Breast epithelium (tissue), 4 donors: ENCODE measurements at regions of chr5 and their contacts with region 1.

Region 1: GRCh38 chr5:123344816-123345426 is 78.3 kb downstream of the CEP120 start:
- DNase-seq: no peak
- H3K4me3 ChIP-seq: no peak overlapping the region
- H3K27ac ChIP-seq: no peak overlapping the region
- H3K4me1 ChIP-seq: no peaks in the 10 kb centered on the region
- H3K27me3 ChIP-seq: no peaks in the 10 kb centered on the region
- CTCF ChIP-seq: peak in 2 of 3 donors; percentile 22 to 62
- POLR2A ChIP-seq: no peak

Region 2: DNA sequence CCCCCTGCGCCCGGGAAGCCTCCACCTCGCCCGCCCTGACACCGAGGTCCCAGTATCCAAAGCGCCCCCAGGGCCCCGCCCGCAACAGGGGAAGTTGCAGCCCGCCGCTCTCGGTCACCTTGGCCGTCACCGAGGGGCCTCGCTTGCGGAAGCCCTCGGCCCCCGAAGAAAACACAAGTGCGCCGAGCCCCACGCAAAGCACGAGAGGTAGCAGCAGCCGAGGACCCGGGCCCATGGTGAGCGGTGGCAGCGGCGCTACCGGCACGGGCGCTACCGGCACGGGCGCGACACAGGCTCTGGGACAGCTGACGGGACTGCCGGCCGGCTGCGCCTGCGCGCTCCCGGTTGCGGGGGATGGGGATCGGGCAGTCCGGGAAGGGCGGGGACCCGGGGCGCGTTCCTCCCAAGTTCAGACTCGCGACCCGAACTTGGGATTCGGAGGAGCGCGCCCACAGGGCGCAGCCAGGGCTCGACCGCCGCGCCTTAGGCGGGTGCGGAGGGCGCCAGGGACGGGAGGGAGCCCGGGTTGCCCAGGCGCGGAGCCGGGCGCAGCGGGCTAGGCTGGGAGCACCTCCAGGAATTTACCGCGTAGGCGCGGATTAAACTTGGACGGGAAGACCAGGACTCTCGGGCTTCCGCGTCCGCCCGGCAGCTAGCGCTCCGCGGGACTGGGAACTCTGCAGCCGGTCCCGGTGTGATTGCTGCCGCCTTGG is 308.4 kb before region 1 on chr5 and contains the start of gene PPIC:
- intact Hi-C with region 1: loop called (anchors 10 kb)
- DNase-seq: peak; percentile 64 to 83
- H3K4me3 ChIP-seq: peak within 1 kb of the TSS; percentile 72 to 93 (median 86)
- H3K27ac ChIP-seq: peak within 1 kb of the TSS; percentile 94 to 98
- H3K4me1 ChIP-seq: peaks cover 0 to 3% of the 10 kb centered on the region in 2 donors
- H3K27me3 ChIP-seq: no peaks in the 10 kb centered on the region
- CTCF ChIP-seq: no peak
- POLR2A ChIP-seq: no peak
- total RNA-seq, gene PPIC: 18.7 to 33.1 (median 30.3) TPM